Transverse colon (tissue), 4 donors: ENCODE measurements at regions of chr3 and their contacts with region 1.

Region 1: DNA sequence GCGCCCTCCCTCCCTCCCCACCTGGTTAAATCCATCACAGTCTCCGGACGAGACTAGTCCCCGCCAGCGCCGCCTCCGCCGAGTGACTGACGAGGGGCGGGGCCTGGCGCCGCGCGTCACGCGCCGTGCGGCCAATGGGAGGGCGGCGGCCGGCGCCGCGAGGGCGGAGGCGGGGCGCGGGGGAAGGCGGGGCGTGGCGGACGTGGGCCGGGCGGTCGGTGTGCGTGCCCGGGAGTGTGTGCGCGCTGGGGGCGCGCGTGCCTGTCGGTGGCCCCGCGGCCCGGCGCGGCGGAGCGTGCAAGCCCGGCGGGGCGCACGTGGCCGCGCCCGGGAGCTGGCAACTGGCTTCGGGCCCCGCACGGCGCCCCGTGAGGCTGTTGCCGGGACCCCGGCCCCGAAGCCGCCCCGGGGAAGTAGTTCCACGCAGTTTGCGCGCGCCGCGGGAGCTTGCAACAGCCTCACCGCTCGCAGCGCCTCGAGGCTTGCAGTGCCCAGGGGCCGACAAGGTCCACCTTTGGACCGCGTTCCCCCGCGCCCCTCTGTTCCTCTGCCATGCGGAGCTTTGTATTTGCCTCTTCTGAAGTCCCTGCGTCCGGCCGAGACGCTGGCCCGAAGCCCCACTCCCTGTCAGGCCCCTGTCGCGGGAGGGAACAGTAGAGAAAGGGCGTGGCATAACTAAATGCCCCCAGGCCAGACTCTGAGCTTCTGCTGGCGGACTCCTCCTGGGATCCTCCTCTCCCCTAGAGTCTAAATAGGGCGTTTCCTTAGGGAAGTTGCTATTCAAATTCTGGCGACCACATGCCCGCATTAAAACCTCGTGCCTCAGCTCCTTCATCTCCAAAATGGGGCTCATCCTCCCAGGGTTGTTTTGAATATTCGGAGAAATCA is 400.9 kb downstream of the SHQ1 start:
- DNase-seq: peak; percentile 95
- H3K4me3 ChIP-seq: peak overlapping the region; percentile 63 to 94 (median 77)
- H3K27ac ChIP-seq: peak overlapping the region; percentile 87 to 98 (median 91)
- H3K4me1 ChIP-seq: peaks cover 0 to 58% (median 21%) of the 10 kb centered on the region in 4 donors
- H3K27me3 ChIP-seq: no peaks in the 10 kb centered on the region
- CTCF ChIP-seq: no peak
- EP300 ChIP-seq: no peak
- POLR2A ChIP-seq: no peak

Region 2: DNA sequence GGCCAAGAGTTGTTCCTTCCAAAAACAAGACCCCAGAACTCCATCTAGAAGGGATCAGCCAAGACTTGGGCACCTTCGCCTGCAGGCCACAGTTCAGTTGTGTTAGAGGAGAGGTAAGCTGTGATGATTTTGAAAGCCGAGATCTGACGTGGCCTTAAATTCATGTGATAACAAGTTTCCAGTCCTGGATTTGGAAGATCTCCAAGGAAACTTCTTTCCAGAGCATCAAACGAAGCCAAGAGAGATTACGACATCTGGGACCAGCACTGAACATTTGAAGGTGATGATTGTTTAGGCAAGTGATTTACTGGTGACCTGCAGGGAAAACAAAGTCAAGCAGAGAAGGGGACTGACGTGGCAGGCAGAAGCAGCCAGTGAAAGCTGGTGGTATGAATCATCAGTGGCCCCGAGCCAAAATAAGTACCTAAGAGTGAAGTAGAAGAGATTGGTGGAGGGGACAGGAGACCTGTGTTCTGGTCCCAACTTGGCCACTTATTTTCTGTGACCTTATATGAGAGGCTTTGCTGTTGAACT is 323.3 kb before region 1 on chr3:
- in situ Hi-C with region 1: no loop called
- intact Hi-C with region 1: loop called (anchors 5 kb)
- DNase-seq: peak; percentile 28
- H3K4me3 ChIP-seq: no peak overlapping the region
- H3K27ac ChIP-seq: peak overlapping the region in 1 of 4 donors; percentile 22
- H3K4me1 ChIP-seq: peaks cover 0 to 5% (median 2%) of the 10 kb centered on the region in 4 donors
- H3K27me3 ChIP-seq: no peaks in the 10 kb centered on the region
- CTCF ChIP-seq: no peak
- EP300 ChIP-seq: no peak
- POLR2A ChIP-seq: no peak

Region 3: GRCh38 chr3:72339116-72340030 is 107.9 kb before region 1 on chr3:
- in situ Hi-C with region 1: no loop called
- intact Hi-C with region 1: loop called (anchors 10 kb)
- DNase-seq: no peak
- H3K4me3 ChIP-seq: no peak overlapping the region
- H3K27ac ChIP-seq: no peak overlapping the region
- H3K4me1 ChIP-seq: peaks cover 10 to 30% (median 14%) of the 10 kb centered on the region in 4 donors
- H3K27me3 ChIP-seq: no peaks in the 10 kb centered on the region
- CTCF ChIP-seq: no peak
- EP300 ChIP-seq: no peak
- POLR2A ChIP-seq: no peak